ENCODE measurements at regions of chr10 and their contacts with region 1.

Region 1: DNA sequence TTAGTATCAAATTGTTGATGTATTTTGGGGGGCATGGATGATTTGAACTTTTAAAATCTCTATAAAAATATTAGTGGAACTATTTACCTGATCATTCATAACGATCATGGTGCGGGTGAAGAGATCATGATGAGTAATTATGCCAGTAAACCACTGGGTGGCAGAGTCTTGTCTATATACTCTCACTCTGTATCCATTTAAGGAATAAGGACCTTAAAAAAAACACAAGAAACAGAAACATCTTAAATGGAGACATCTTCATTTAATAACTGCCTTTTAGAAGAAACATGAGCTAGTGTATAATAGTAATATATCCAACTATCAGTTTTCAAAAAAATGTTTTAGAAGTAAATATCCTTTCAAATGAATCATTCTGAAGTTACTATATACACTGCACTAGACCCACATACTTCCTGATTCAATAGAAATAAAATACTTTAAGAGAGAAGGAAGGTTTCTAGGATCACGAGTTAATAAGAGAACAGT is 84.0 kb downstream of the NRBF2 start:
- DNase-seq: no peak
- H3K4me3 ChIP-seq: no peak overlapping the region
- H3K27ac ChIP-seq: no peak overlapping the region
- H3K4me1 ChIP-seq: peaks cover 0 to 6% (median 0%) of the 10 kb centered on the region in 4 experiments; a peak in 1 of 7 replicates
- H3K27me3 ChIP-seq: no peaks in the 10 kb centered on the region
- CTCF ChIP-seq: peak in 2 of 3 experiments; percentile 26 to 36; a peak in 2 of 4 replicates
- EP300 ChIP-seq: no peak
- POLR2A ChIP-seq: no peak
- RAD21 ChIP-seq: peak; percentile 54 to 63

Region 2: GRCh38 chr10:63173468-63174232 is 43.5 kb before region 1 on chr10:
- CTCF ChIA-PET with region 1: no interaction called
- POLR2A ChIA-PET with region 1: no interaction called
- DNase-seq: no peak
- H3K4me3 ChIP-seq: no peak overlapping the region
- H3K27ac ChIP-seq: no peak overlapping the region
- H3K4me1 ChIP-seq: no peaks in the 10 kb centered on the region
- H3K27me3 ChIP-seq: no peaks in the 10 kb centered on the region
- CTCF ChIP-seq: no peak
- EP300 ChIP-seq: no peak
- POLR2A ChIP-seq: no peak
- RAD21 ChIP-seq: no peak

Region 3: DNA sequence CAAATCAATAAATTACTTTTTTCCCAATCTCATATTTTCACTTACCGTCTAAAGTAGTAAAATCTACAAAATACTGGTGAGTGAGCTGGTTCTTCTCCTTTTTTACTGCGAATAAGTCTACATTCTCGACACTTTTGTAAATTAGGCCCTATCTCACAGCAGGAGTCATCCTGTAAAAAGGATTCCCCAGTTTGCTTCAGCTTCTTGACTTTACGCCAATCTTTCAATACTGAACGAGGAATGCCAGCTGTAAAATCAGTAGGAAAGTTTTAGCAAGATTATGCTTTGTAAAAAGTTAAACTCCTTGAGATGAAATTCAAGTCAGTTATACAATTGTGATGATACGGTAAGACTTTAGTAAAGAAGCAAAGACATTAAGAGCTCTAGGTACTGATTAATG is 16.7 kb before region 1 on chr10:
- CTCF ChIA-PET with region 1: interaction called, 11 read pairs
- POLR2A ChIA-PET with region 1: interaction called, 4 read pairs
- DNase-seq: no peak
- H3K4me3 ChIP-seq: peak overlapping the region in 1 of 4 experiments; percentile 8; a peak in 1 of 8 replicates
- H3K27ac ChIP-seq: no peak overlapping the region
- H3K4me1 ChIP-seq: peaks cover 0 to 14% (median 7%) of the 10 kb centered on the region in 4 experiments; a peak in 5 of 7 replicates
- H3K27me3 ChIP-seq: no peaks in the 10 kb centered on the region
- CTCF ChIP-seq: no peak
- EP300 ChIP-seq: no peak
- POLR2A ChIP-seq: no peak
- RAD21 ChIP-seq: no peak

Region 4: GRCh38 chr10:63227207-63227915 is 10.2 kb after region 1 on chr10:
- CTCF ChIA-PET with region 1: interaction called, 10 read pairs
- POLR2A ChIA-PET with region 1: interaction called, 4 read pairs
- DNase-seq: no peak
- H3K4me3 ChIP-seq: no peak overlapping the region
- H3K27ac ChIP-seq: no peak overlapping the region
- H3K4me1 ChIP-seq: no peaks in the 10 kb centered on the region; a peak in 1 of 7 replicates
- H3K27me3 ChIP-seq: no peaks in the 10 kb centered on the region
- CTCF ChIP-seq: no peak
- EP300 ChIP-seq: no peak
- POLR2A ChIP-seq: no peak; a peak in 1 of 3 replicates
- RAD21 ChIP-seq: no peak

Region 5: DNA sequence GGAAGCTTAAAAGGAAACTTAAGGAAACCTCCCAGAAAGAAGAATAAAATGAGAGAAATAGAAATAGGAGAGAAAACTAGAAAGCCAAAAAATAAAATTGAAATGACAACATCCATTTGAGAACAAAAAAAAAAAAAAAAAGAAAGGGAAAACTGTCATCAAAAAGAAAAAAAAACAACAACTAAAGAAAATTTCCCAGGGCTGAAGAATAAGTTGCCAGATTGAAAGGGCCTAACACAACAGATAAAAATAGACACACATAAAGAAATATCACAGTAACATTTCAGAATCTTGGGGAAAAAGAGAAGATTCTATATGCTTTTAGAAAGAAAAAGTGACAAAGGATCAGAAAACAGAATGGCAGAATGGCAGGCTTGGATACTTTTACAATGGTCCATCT is 91.5 kb after region 1 on chr10:
- CTCF ChIA-PET with region 1: no interaction called
- POLR2A ChIA-PET with region 1: no interaction called
- DNase-seq: no peak
- H3K4me3 ChIP-seq: no peak overlapping the region
- H3K27ac ChIP-seq: no peak overlapping the region
- H3K4me1 ChIP-seq: no peaks in the 10 kb centered on the region
- H3K27me3 ChIP-seq: no peaks in the 10 kb centered on the region
- CTCF ChIP-seq: no peak
- EP300 ChIP-seq: no peak
- POLR2A ChIP-seq: no peak
- RAD21 ChIP-seq: no peak

Measured in H1 (cell line).